GM10248 (cell line): ENCODE measurements at regions of chr12 and their contacts with region 1.

Region 1: DNA sequence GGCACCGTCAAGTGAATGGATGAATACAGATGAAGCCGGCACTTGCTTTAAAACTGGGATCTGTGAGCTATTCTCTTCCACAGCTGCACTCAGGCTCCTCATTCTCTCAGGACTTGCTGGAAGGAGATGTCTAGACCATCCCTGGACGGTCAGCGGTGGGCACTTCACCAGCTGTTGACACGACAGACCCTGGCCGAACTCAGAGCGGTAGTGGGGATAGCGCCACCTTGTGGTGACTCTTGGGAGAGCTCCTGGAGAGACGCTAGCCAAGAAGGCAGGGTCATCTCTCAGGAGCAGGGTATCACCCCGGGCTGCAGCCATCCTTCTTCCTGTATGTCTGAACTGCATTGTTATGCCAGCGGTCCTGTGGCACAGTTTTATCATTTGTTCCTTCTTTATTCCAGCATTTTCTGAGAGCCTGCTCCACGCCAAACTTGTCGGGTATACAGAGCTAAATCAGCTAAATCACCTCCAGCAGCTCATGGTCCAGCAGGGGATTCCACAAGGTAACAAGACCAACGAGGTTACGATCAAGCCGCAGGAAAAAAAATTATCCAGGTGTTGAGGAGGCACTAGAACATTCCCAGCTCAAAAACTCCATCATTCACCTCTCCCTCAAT is 10.0 kb downstream of the WNT1 start:
- DNase-seq: peak; percentile 80
- CTCF ChIP-seq: peak; percentile 85

Region 2: GRCh38 chr12:48890657-48891418 is 97.3 kb before region 1 on chr12:
- CTCF ChIA-PET with region 1: interaction called, 21 read pairs
- POLR2A ChIA-PET with region 1: no interaction called
- DNase-seq: peak; percentile 83
- CTCF ChIP-seq: peak; percentile 85

Region 3: GRCh38 chr12:48924617-48925303 is 63.4 kb before region 1 on chr12:
- CTCF ChIA-PET with region 1: interaction called, 31 read pairs
- POLR2A ChIA-PET with region 1: no interaction called
- DNase-seq: peak; percentile 86
- CTCF ChIP-seq: peak; percentile 77

Region 4: GRCh38 chr12:48957141-48958048 is 30.7 kb before region 1 on chr12 and contains the start of gene ARF3:
- CTCF ChIA-PET with region 1: interaction called, 264 read pairs
- POLR2A ChIA-PET with region 1: no interaction called
- DNase-seq: peak; percentile 97
- CTCF ChIP-seq: no peak

Region 5: DNA sequence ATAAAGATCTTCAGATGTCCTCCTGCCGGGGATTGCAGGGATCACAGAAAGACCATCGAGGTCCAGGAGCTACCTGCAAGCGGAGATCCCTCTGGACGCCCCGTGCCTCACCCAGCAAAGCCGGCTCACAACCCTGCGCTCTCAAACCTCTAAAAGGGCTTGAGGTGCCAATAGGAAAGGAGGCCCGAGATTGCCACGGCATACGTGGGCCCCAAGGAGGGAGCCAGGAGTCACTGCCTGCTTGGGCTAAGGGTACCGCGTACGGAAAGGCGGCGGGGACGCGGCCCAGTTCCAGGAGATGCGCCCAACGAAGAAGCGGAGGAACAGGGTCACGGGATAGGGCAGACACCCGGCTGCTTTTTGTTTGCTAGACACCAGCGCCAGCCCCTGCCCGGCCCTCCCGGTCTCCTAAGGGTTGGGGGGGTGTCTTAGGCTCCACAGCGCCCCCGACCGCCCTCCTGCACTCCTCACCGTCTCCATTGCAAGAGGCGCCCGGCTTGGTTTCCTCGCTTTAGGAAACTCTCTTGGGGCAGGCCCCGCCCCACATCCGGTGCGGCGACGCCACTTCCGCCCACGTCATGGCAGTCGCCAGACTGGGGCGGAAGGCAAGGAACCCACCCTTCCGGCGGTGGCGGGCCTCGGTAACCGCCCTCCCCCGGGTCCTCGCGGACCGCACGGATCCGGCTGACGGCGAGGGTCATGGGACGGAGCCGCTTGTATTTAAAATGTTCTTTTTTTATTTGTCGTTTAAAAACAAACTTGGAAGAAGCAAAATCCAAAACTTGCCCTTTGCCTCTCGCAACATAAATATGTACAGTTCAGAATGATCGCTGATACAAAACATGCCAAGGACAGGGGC is 30.4 kb after region 1 on chr12 and contains the start of gene PRKAG1:
- CTCF ChIA-PET with region 1: interaction called, 253 read pairs
- POLR2A ChIA-PET with region 1: no interaction called
- DNase-seq: peak; percentile 99
- CTCF ChIP-seq: peak; percentile 53

Region 6: GRCh38 chr12:49037111-49037946 is 49.2 kb after region 1 on chr12:
- CTCF ChIA-PET with region 1: interaction called, 10 read pairs
- POLR2A ChIA-PET with region 1: no interaction called
- DNase-seq: no peak
- CTCF ChIP-seq: no peak

Region 7: DNA sequence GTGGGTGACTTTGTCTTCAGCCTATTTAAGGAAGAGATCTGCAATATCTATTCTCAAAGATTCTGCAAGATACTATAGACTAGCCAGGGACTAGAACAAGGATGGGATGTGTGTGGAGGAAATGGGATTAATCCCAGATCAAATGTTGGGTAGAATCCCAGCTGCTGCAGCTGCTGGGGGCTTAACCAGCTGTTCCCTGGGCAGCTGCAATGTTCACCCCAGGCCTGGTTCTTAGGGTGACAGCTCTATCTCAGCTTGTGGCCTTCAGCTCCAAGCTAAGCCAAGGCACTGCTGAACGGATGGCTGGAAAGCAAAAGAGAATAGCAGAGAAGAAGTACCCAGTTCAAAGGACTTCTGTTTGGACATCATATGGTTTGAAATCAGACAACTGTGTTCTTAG is 91.7 kb after region 1 on chr12:
- CTCF ChIA-PET with region 1: no interaction called
- POLR2A ChIA-PET with region 1: no interaction called
- DNase-seq: no peak
- CTCF ChIP-seq: no peak